ENCODE measurements at regions of chr12 and their contacts with region 1.

Region 1: DNA sequence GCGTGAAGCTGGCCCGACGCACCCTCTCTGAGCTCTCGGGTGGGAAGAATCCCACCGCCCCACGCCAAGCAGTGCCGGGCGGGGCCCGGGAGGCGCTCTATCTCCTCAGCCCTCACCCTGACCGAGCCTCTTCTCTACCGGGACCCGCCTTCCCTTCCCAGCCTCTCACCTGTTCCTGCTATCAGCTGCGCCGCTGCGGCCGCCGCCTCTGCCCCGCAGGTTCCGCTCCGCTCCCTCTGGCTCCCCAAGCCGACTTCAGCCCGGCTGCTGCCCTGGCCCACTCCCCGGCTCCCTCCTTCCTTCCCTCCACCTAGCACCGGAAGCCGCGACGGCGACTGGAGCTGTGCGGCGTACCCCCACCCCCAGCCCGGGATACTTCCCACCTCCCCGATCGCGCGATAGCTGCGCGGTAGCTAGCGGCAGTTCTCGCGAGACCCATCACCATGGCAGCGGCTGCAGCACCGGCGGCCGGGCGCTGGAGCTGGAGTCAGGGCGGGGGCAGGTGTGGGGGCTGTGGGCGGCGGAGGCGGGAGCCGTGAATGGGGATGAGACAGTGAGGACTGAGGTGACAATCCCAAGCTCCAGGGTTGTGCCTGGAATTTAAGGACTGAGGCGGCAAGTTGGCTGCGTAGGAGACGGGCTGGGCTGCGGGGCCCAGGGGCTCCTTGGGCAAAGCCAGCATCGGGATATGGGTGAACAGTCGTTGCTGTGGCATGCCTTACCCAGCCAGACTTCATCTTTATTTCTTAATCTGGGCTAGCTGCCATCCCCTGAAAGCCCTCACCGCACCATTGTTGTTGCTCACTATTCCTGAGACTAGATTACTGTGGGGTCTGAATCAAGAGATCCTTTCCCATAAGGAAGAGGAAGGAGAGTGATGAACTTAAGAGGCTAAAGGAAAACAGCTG is at the start of gene ARF3:
- DNase-seq: peak; percentile 94
- ATAC-seq: peak; percentile 96
- H3K4me3 Mint-ChIP-seq: peak within 1 kb of the TSS; percentile 96
- H3K27ac Mint-ChIP-seq: peak within 1 kb of the TSS; percentile 87
- H3K4me1 Mint-ChIP-seq: peaks cover 25% of the 10 kb centered on the region
- H3K27me3 Mint-ChIP-seq: peaks cover 7% of the 10 kb centered on the region
- CTCF ChIP-seq: no peak
- total RNA-seq, gene ARF3: 58.3 to 67.6 TPM

Region 2: DNA sequence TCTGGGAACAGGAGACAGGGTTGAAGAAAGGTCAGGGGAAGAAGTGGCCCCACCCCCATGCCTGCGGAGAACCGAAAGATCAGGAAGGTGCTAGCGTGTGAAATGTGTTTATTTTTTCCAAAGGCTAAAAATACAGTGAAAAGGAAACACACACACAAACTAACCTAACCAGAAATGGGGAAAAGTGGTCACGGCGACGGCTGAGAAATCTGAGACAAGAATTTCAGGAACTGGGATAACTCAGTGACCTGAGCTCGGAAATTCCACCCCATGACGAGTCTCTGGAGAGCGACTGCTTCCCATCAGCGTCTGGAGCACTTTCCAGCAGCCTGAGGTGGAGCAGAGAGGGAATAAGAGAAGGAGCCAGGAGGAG is 75.1 kb before region 1 on chr12:
- CTCF ChIA-PET with region 1: no interaction called
- POLR2A ChIA-PET with region 1: no interaction called
- intact Hi-C with region 1: no loop called
- DNase-seq: no peak
- ATAC-seq: no peak
- H3K4me3 Mint-ChIP-seq: no peak overlapping the region
- H3K27ac Mint-ChIP-seq: no peak overlapping the region
- H3K4me1 Mint-ChIP-seq: no peaks in the 10 kb centered on the region
- H3K27me3 Mint-ChIP-seq: peaks cover 22% of the 10 kb centered on the region
- CTCF ChIP-seq: no peak

Region 3: DNA sequence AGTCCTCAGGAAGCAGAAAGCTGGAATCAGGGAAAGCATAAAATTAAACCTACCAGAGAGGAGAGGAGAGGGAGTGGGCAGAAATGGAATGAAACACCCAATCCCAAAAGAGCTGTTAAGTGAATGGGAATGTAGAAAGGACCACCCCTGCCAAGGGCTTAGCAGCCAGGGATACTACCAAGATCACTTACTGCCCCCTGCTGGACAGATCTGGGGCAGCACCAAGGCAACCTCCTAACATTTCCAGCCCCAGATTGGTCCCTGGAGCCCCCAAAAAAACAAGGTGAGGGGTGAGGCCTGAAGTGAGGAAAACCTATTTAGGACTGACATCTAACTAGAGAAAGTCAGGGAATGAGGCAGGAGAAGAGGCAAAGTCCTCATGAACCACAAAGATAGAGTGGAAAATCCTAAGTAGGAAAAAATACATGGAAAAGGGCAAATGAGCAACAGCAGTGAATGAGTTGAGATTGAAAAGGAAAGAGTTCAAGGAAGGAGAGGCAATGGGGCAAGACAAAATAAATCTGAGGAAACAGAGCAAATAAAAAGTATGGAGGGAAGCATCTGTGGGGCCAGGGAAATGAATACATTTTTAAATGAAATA is 20.9 kb before region 1 on chr12:
- CTCF ChIA-PET with region 1: interaction called, 73 read pairs
- POLR2A ChIA-PET with region 1: interaction called, 7 read pairs
- intact Hi-C with region 1: no loop called
- DNase-seq: peak; percentile 92
- ATAC-seq: peak; percentile 79
- H3K4me3 Mint-ChIP-seq: no peak overlapping the region
- H3K27ac Mint-ChIP-seq: no peak overlapping the region
- H3K4me1 Mint-ChIP-seq: peaks cover 24% of the 10 kb centered on the region
- H3K27me3 Mint-ChIP-seq: no peaks in the 10 kb centered on the region
- CTCF ChIP-seq: peak; percentile 86

Region 4: DNA sequence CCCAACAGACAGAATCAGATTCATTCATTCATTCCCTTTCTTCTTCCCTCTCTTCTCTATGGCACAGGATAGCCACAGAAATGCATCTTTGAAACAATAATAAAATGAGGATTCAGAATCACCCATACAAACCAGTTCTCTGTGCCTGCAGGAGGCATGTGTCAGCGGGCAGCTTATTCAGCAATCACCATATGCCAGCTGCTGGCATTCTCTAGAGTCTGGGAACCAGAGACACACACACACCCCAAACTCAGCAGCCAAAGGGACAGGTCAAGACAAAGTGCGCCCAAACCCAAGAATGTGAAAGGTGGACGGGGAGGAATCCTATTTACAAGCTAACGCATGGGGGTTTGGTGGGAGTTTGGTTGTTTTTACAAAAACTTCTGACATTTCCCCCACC is 14.2 kb before region 1 on chr12:
- CTCF ChIA-PET with region 1: interaction called, 73 read pairs
- POLR2A ChIA-PET with region 1: interaction called, 11 read pairs
- intact Hi-C with region 1: no loop called
- DNase-seq: no peak
- ATAC-seq: no peak
- H3K4me3 Mint-ChIP-seq: no peak overlapping the region
- H3K27ac Mint-ChIP-seq: no peak overlapping the region
- H3K4me1 Mint-ChIP-seq: peaks cover 6% of the 10 kb centered on the region
- H3K27me3 Mint-ChIP-seq: no peaks in the 10 kb centered on the region
- CTCF ChIP-seq: no peak

Region 5: GRCh38 chr12:48969833-48970701 is 12.7 kb after region 1 on chr12:
- CTCF ChIA-PET with region 1: interaction called, 25 read pairs
- POLR2A ChIA-PET with region 1: interaction called, 14 read pairs
- intact Hi-C with region 1: no loop called
- DNase-seq: peak; percentile 26
- ATAC-seq: peak; percentile 14
- H3K4me3 Mint-ChIP-seq: peak overlapping the region; percentile 17
- H3K27ac Mint-ChIP-seq: no peak overlapping the region
- H3K4me1 Mint-ChIP-seq: peaks cover 48% of the 10 kb centered on the region
- H3K27me3 Mint-ChIP-seq: peaks cover 34% of the 10 kb centered on the region
- CTCF ChIP-seq: no peak

Region 6: GRCh38 chr12:48977315-48978281 is 20.2 kb after region 1 on chr12:
- CTCF ChIA-PET with region 1: interaction called, 52 read pairs
- POLR2A ChIA-PET with region 1: interaction called, 11 read pairs
- intact Hi-C with region 1: no loop called
- DNase-seq: peak; percentile 88
- ATAC-seq: peak; percentile 60
- H3K4me3 Mint-ChIP-seq: peak overlapping the region; percentile 3
- H3K27ac Mint-ChIP-seq: peak overlapping the region; percentile 51
- H3K4me1 Mint-ChIP-seq: peaks cover 52% of the 10 kb centered on the region
- H3K27me3 Mint-ChIP-seq: peaks cover 63% of the 10 kb centered on the region
- CTCF ChIP-seq: peak; percentile 97

Region 7: DNA sequence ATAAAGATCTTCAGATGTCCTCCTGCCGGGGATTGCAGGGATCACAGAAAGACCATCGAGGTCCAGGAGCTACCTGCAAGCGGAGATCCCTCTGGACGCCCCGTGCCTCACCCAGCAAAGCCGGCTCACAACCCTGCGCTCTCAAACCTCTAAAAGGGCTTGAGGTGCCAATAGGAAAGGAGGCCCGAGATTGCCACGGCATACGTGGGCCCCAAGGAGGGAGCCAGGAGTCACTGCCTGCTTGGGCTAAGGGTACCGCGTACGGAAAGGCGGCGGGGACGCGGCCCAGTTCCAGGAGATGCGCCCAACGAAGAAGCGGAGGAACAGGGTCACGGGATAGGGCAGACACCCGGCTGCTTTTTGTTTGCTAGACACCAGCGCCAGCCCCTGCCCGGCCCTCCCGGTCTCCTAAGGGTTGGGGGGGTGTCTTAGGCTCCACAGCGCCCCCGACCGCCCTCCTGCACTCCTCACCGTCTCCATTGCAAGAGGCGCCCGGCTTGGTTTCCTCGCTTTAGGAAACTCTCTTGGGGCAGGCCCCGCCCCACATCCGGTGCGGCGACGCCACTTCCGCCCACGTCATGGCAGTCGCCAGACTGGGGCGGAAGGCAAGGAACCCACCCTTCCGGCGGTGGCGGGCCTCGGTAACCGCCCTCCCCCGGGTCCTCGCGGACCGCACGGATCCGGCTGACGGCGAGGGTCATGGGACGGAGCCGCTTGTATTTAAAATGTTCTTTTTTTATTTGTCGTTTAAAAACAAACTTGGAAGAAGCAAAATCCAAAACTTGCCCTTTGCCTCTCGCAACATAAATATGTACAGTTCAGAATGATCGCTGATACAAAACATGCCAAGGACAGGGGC is 61.1 kb after region 1 on chr12 and contains the start of gene PRKAG1:
- CTCF ChIA-PET with region 1: no interaction called
- POLR2A ChIA-PET with region 1: no interaction called
- intact Hi-C with region 1: no loop called
- DNase-seq: peak; percentile 96
- ATAC-seq: peak; percentile 90
- H3K4me3 Mint-ChIP-seq: peak within 1 kb of the TSS; percentile 95
- H3K27ac Mint-ChIP-seq: peak within 1 kb of the TSS; percentile 98
- H3K4me1 Mint-ChIP-seq: peaks cover 23% of the 10 kb centered on the region
- H3K27me3 Mint-ChIP-seq: no peaks in the 10 kb centered on the region
- CTCF ChIP-seq: peak; percentile 57
- total RNA-seq, gene PRKAG1: 43.3 to 47.3 TPM

Measured in activated CD8-positive, alpha-beta T cell treated with anti-CD3 and anti-CD28 coated beads for 36 hours (primary cell).